ENCODE measurements at regions of chr9 and their contacts with region 1.

Region 1: GRCh38 chr9:13450723-13451122 is 171.2 kb upstream of the MPDZ start:
- DNase-seq: no peak
- ATAC-seq: no peak
- H3K4me3 ChIP-seq: no peak overlapping the region
- H3K27ac ChIP-seq: no peak overlapping the region
- H3K4me1 ChIP-seq: peaks cover 0 to 43% (median 27%) of the 10 kb centered on the region in 9 donors
- H3K27me3 ChIP-seq: no peaks in the 10 kb centered on the region
- CTCF ChIP-seq: no peak

Region 2: DNA sequence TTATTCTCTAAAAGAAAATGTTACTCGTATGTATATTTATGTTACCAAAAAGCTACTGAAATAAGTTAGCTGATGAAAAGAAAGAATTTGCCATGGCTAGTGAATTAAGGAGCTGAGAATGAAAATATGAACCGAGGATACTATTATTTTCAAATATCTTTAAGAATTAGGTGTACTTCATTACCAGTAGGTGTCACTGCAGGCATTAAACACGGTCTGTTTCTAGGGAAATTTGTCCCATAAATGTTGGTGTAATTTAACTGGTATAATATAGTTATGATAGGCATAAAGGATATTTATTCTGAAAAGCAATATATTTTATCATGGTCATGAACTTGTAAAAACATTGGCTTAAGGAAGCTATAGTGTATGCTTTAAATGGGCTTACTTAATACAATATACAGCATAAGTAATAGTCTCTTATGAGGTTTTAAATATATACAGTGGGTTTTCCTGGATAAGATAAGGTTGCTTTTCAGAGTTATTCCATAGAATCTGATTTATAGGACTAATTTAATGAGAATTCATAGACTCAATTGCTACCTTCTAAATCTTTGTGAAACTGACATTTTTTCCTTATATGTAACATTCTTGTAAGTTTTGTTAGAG is 98.8 kb before region 1 on chr9:
- intact Hi-C with region 1: no loop called
- DNase-seq: peak in 1 of 2 donors; percentile 40
- ATAC-seq: peak in 2 of 8 donors; percentile 31 to 55
- H3K4me3 ChIP-seq: no peak overlapping the region
- H3K27ac ChIP-seq: no peak overlapping the region
- H3K4me1 ChIP-seq: no peaks in the 10 kb centered on the region
- H3K27me3 ChIP-seq: no peaks in the 10 kb centered on the region
- CTCF ChIP-seq: peak; percentile 54 to 84 (median 68)

Region 3: DNA sequence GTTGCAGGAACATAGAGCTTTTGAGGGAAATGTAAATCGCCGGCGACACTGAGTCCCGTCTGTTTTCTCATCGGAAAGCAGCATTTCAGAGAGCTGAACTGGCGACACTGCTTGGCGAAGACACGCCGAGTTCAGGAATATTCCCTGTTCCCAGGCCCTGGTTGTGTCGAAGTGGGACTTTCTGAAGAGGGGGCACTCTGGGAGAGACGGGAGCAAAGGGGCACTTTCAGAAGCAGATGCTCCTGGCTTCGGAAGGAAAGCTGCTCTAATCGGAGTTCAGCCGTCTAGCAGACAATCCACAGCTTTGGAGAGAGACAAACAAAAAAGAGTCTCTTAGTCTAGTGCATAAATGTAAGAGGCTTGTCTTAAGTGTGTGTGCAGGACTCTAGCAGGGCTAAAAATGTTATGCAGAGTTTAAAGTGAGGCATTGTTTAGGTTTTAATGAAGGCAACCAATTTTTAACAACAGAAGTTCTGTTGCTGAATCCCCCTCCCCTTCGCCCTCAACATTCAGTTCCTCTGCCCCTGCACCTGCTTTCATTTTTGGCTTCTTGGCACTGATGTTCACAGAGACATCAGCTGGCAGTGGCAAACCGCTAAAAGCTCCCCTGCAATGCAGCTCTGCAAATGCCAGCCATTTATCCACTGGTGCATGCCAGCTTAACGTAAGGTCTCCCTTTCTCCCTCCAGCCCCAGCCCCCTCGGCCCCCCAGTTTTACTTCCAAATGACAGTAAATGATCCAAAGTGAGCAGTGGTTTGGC is 118.3 kb after region 1 on chr9:
- intact Hi-C with region 1: loop called in 2 of 10 experiments (anchors 10 kb)
- DNase-seq: peak; percentile 13 to 19
- ATAC-seq: peak; percentile 23 to 63 (median 49)
- H3K4me3 ChIP-seq: peak overlapping the region in 8 of 10 donors; percentile 1 to 47 (median 34)
- H3K27ac ChIP-seq: peak overlapping the region; percentile 59 to 94 (median 84)
- H3K4me1 ChIP-seq: peaks cover 6 to 48% (median 39%) of the 10 kb centered on the region in 9 donors
- H3K27me3 ChIP-seq: no peaks in the 10 kb centered on the region
- CTCF ChIP-seq: no peak

Region 4: GRCh38 chr9:13607481-13608441 is 157.0 kb after region 1 on chr9:
- intact Hi-C with region 1: loop called in 1 of 10 experiments (anchors 5 kb)
- DNase-seq: peak in 1 of 2 donors; percentile 45
- ATAC-seq: peak; percentile 82 to 95 (median 89)
- H3K4me3 ChIP-seq: peak overlapping the region in 8 of 10 donors; percentile 2 to 39 (median 22)
- H3K27ac ChIP-seq: peak overlapping the region; percentile 64 to 90 (median 80)
- H3K4me1 ChIP-seq: peaks cover 5 to 48% (median 29%) of the 10 kb centered on the region in 9 donors
- H3K27me3 ChIP-seq: no peaks in the 10 kb centered on the region
- CTCF ChIP-seq: no peak

Region 5: GRCh38 chr9:13688994-13689600 is 238.4 kb after region 1 on chr9:
- intact Hi-C with region 1: loop called in 7 of 10 experiments (anchors 5 to 10 kb)
- DNase-seq: peak in 1 of 2 donors; percentile 19
- ATAC-seq: peak in 3 of 8 donors; percentile 33 to 38 (median 34)
- H3K4me3 ChIP-seq: no peak overlapping the region
- H3K27ac ChIP-seq: peak overlapping the region in 4 of 10 donors; percentile 1 to 54 (median 30)
- H3K4me1 ChIP-seq: peaks cover 0 to 33% (median 13%) of the 10 kb centered on the region in 9 donors
- H3K27me3 ChIP-seq: no peaks in the 10 kb centered on the region
- CTCF ChIP-seq: peak; percentile 17 to 72 (median 54)

Region 6: DNA sequence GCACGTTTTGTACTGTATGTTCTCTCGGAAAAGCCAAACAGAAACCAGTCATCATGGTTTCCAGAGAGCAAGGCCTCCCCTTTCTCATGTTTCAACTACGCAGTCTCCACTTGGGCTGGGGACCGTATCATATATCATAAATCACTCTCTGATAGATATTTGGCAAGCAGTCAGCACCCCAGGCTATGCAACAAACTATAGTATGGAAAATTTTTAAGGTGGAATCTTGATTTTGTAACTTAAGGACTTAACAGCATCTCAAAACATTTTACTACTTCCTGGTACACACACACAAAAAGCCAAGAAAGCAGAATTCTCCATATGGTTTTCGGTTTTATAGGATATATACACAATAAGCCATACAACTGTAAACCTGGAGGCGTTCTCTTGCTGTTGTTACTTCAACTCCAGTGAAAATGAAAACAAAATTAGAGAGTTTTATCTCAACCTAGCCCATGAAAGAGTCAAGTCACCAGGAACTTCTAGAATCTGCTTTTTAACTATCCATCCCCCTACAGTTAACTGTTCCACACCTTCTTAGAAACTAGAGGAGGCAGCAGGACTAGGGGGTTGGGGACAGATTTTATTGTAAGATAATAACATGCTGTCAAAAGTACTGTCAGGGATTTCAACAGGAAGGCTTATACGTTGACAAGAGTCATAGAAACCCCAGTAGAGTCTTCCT is 579.8 kb after region 1 on chr9:
- intact Hi-C with region 1: loop called in 1 of 10 experiments (anchors 5 kb)
- DNase-seq: no peak
- ATAC-seq: peak in 6 of 8 donors; percentile 1 to 69 (median 36)
- H3K4me3 ChIP-seq: peak overlapping the region in 9 of 10 donors; percentile 16 to 44 (median 36)
- H3K27ac ChIP-seq: peak overlapping the region; percentile 68 to 94 (median 86)
- H3K4me1 ChIP-seq: peaks cover 15 to 65% (median 41%) of the 10 kb centered on the region in 9 donors
- H3K27me3 ChIP-seq: no peaks in the 10 kb centered on the region
- CTCF ChIP-seq: no peak

Region 7: DNA sequence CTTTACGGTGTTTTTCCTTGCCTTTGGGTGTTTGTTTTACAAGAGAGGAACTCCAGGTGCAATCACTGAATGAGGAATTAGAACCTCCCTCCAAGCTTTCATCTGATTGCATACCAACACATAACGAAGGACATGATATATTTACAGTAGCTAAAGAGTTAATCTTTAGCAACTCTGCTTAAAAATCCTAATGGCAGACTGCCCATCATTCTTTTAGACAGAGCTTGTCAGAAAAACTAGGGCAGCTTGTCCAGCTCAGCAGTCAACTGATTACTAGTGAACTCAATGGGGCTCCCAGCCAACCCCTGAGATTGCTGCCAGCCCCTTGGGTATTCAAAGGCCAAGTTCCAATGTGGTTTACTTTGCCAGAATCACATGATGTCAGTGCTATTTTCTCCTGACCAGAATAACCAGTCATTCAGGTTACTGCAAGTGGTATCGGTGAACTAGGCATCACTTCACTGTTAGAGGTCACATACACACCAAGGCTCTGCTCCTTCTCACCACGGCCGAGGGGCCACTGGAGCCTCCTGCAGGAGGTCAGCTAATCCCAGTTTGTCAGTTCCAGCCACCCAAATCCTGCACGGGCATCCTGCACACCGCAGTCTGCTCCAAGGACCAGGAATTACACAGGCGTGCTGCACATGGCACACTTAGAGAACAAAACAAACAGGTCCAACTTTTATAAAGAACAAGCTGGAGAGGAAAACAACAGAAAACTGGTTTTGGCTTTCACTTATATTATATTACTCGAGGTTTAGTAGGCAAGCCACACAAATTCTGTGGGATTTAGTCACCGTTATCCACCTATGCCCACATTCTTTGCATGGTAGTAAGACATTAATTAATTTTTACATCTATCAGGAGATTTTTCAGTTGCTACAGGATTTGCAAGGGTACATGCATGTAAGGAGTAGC is 800.7 kb after region 1 on chr9:
- intact Hi-C with region 1: loop called in 1 of 10 experiments (anchors 10 kb)
- DNase-seq: peak; percentile 82 to 87
- ATAC-seq: peak; percentile 88 to 98 (median 94)
- H3K4me3 ChIP-seq: peak overlapping the region in 5 of 10 donors; percentile 7 to 23 (median 12)
- H3K27ac ChIP-seq: peak overlapping the region in 9 of 10 donors; percentile 49 to 82 (median 71)
- H3K4me1 ChIP-seq: peaks cover 20 to 87% (median 63%) of the 10 kb centered on the region in 9 donors
- H3K27me3 ChIP-seq: no peaks in the 10 kb centered on the region
- CTCF ChIP-seq: no peak

Measured in heart right ventricle (tissue), 16 donors.